HepG2 (cell line): ENCODE measurements at regions of chr17 and their contacts with region 1.

Region 1: GRCh38 chr17:73311781-73312641 is at the start of gene CDC42EP4:
- DNase-seq: peak; percentile 90
- ATAC-seq: peak; percentile 85
- H3K4me3 ChIP-seq: peak within 1 kb of the TSS; percentile 80 to 99 (median 99)
- H3K27ac ChIP-seq: peak within 1 kb of the TSS; percentile 87
- H3K4me1 ChIP-seq: peaks cover 57% of the 10 kb centered on the region
- H3K27me3 ChIP-seq: peaks cover 4 to 16% of the 10 kb centered on the region in 2 experiments; a peak in 4 of 5 replicates
- CTCF ChIP-seq: 0 out of 2 replicates have a peak, but pooled peaks have one; percentile 12
- EP300 ChIP-seq: no peak; a peak in 1 of 4 replicates
- POLR2A ChIP-seq: peak; percentile 43 to 93
- RAD21 ChIP-seq: 0 out of 2 replicates have a peak, but pooled peaks have one; percentile 31
- total RNA-seq, gene CDC42EP4: 54.0 and 55.0 TPM in 2 replicates

Region 2: GRCh38 chr17:73166731-73167581 is 145.1 kb before region 1 on chr17:
- CTCF ChIA-PET with region 1: no interaction called
- POLR2A ChIA-PET with region 1: no interaction called
- in situ Hi-C with region 1: no loop called
- intact Hi-C with region 1: no loop called
- DNase-seq: no peak
- ATAC-seq: peak; percentile 42
- H3K4me3 ChIP-seq: 0 out of 6 replicates have a peak overlapping the region, but pooled peaks of 1 of the 3 experiments have one; percentile 25
- H3K27ac ChIP-seq: no peak overlapping the region
- H3K4me1 ChIP-seq: peaks cover 31% of the 10 kb centered on the region
- H3K27me3 ChIP-seq: peaks cover 28 to 78% of the 10 kb centered on the region in 2 experiments
- CTCF ChIP-seq: no peak
- EP300 ChIP-seq: no peak
- POLR2A ChIP-seq: no peak
- RAD21 ChIP-seq: no peak

Region 3: GRCh38 chr17:73203135-73203787 is 108.8 kb before region 1 on chr17:
- CTCF ChIA-PET with region 1: no interaction called
- POLR2A ChIA-PET with region 1: interaction called, 6 read pairs
- in situ Hi-C with region 1: no loop called
- intact Hi-C with region 1: loop called (anchors 5 kb)
- DNase-seq: peak; percentile 96
- ATAC-seq: peak; percentile 41
- H3K4me3 ChIP-seq: peak overlapping the region in 2 of 3 experiments; percentile 2 to 36; a peak in 1 of 6 replicates
- H3K27ac ChIP-seq: peak overlapping the region; percentile 83
- H3K4me1 ChIP-seq: peaks cover 70% of the 10 kb centered on the region
- H3K27me3 ChIP-seq: no peaks in the 10 kb centered on the region
- CTCF ChIP-seq: no peak
- EP300 ChIP-seq: peak in 1 of 2 experiments; percentile 68; a peak in 2 of 4 replicates
- POLR2A ChIP-seq: peak; percentile 25 to 39; a peak in 1 of 4 replicates
- RAD21 ChIP-seq: no peak

Region 4: DNA sequence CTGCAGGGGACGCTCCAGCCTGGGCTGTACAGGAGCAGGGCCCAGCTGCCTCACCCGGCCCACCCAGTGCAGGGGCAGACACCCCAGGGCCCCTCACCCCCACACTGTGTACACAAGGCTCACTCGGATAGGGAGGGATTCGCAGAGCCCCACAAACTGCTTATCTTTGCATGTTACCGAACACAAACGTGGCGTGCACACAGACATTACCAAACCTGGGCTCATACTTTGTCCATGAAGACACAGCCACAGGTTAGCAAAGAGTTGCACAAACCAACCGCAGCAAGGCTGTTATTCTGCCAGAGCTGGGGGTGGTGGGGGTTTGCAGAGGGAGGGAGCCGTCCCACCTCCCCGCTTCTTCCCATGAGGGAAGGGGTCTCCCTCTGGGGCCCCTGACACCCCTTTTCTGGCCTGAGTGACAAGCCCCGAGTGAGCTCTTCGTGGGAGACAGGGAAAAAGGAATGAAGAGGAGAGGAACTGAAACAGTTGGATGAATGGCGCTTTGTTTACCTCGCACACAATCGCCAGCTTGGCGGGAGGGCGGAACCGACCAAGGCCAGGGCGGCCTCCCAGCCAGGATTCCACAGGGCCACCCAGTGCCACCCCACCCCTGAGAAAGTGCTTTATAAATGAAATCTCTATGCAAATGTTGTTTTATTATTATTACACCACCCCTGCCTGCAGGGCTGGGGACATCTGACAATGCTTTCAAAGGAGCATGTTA is 49.9 kb before region 1 on chr17:
- CTCF ChIA-PET with region 1: interaction called, 3 read pairs
- POLR2A ChIA-PET with region 1: interaction called, 204 read pairs
- in situ Hi-C with region 1: loop called (anchors 5 kb)
- intact Hi-C with region 1: loop called (anchors 1 kb)
- DNase-seq: peak; percentile 93
- ATAC-seq: peak; percentile 90
- H3K4me3 ChIP-seq: peak overlapping the region; percentile 54 to 75 (median 63)
- H3K27ac ChIP-seq: peak overlapping the region; percentile 98
- H3K4me1 ChIP-seq: peaks cover 74% of the 10 kb centered on the region
- H3K27me3 ChIP-seq: no peaks in the 10 kb centered on the region
- CTCF ChIP-seq: peak; percentile 78
- EP300 ChIP-seq: peak; percentile 62 to 73; a peak in 2 of 4 replicates
- POLR2A ChIP-seq: peak; percentile 62 to 87
- RAD21 ChIP-seq: peak; percentile 82

Region 5: DNA sequence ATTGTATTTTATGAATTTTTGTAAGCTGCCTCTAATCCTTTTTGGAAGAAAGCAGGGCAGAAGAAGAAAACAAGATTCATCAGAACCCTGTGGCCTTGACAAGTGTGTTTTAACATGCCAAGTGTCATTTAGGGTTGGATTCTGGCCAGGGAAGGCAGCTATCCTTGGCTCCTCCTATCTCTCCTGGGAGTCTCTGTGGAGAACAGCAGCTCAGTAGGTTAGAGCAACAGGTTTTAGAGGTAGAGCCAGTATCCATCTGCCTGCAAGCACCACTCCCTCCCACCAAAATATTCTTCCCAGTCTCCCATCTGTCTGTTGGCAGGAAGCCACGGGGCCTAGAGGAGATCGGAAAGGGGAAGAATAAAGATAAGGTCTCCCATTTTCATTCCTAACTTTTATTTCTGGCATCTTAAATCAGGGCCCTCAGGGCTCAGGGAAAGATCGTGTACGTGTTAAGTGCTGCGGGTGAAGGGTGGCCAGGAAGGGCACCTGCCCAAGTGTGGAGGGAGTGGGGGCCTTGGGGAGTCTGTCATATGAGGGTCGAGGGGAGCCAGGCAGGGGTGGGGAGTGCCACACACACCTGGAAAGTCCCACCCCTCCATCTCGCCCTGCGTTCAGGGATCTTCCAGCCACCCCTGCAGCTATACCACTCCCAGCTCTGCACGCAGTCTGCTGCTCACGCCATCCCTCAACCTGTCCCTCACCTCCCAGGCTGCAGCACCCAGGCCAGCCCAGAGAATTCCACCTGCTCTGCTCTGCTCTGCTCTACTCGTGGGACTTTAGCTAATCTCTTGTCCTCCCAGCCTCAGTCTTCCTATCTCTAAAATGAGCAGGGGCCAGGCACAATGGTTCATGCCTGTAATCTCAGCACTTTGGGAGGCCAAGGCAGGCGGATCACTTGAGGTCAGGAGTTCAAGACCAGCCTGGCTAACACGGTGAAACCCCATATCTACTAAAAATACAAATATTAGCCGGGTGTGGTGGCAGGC is 33.3 kb before region 1 on chr17:
- CTCF ChIA-PET with region 1: no interaction called
- POLR2A ChIA-PET with region 1: interaction called, 32 read pairs
- in situ Hi-C with region 1: no loop called
- intact Hi-C with region 1: loop called (anchors 1 kb)
- DNase-seq: no peak
- ATAC-seq: peak; percentile 60
- H3K4me3 ChIP-seq: peak overlapping the region in 1 of 3 experiments; percentile 7; a peak in 1 of 6 replicates
- H3K27ac ChIP-seq: peak overlapping the region; percentile 74
- H3K4me1 ChIP-seq: peaks cover 48% of the 10 kb centered on the region
- H3K27me3 ChIP-seq: no peaks in the 10 kb centered on the region
- CTCF ChIP-seq: no peak
- EP300 ChIP-seq: no peak
- POLR2A ChIP-seq: no peak
- RAD21 ChIP-seq: no peak

Region 6: GRCh38 chr17:73297934-73298861 is 13.8 kb before region 1 on chr17:
- CTCF ChIA-PET with region 1: no interaction called
- POLR2A ChIA-PET with region 1: interaction called, 77 read pairs
- in situ Hi-C with region 1: no loop called
- intact Hi-C with region 1: loop called (anchors 2 kb)
- DNase-seq: peak; percentile 36
- ATAC-seq: peak; percentile 53
- H3K4me3 ChIP-seq: no peak overlapping the region
- H3K27ac ChIP-seq: peak overlapping the region; percentile 7
- H3K4me1 ChIP-seq: peaks cover 86% of the 10 kb centered on the region
- H3K27me3 ChIP-seq: no peaks in the 10 kb centered on the region
- CTCF ChIP-seq: no peak
- EP300 ChIP-seq: no peak
- POLR2A ChIP-seq: no peak
- RAD21 ChIP-seq: no peak

Region 7: GRCh38 chr17:73560661-73561060 is 248.7 kb after region 1 on chr17:
- CTCF ChIA-PET with region 1: no interaction called
- POLR2A ChIA-PET with region 1: no interaction called
- in situ Hi-C with region 1: no loop called
- intact Hi-C with region 1: no loop called
- DNase-seq: peak; percentile 16
- ATAC-seq: peak; percentile 72
- H3K4me3 ChIP-seq: no peak overlapping the region
- H3K27ac ChIP-seq: no peak overlapping the region
- H3K4me1 ChIP-seq: no peaks in the 10 kb centered on the region
- H3K27me3 ChIP-seq: peaks cover 0 to 35% of the 10 kb centered on the region in 2 experiments; a peak in 3 of 5 replicates
- CTCF ChIP-seq: peak; percentile 35
- EP300 ChIP-seq: no peak
- POLR2A ChIP-seq: no peak
- RAD21 ChIP-seq: no peak